ENCODE measurements at regions of chr20 and their contacts with region 1.

Region 1: DNA sequence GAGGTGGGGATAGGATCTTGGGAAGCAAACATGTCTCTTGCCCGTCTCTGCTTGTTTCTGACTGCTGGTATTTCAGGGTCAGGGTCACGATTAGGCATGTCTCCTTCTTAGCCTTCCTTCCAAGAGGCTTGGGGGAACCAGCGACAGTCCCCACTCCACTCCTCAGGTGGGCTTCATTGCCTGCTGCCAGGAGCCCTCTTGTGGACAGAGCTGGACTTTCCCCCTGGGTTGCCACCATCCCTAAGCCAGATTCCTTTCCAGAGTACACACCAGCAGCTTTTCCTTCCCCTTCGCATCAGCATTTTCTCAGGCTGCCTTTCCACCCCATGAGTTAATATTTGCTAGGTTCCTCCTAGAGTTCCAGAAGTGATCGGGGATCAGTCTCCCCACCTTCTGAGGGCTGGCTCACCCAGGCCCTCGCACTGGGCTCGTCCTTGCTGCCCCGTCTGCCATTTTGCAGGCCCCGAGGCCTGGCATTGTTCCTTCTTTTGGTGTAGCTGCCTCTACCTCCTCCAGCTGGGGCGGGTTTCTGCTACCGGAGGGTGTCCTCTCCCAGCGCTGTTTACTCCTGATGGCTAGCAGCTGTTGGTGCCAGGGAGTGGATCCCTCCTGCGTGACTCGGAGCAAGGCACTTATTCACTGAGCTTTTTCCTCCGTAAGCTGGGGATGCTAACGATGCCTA is 8.8 kb upstream of the C20orf144 start:
- DNase-seq: peak in 1 of 2 experiments; percentile 60
- H3K4me3 ChIP-seq: no peak overlapping the region
- H3K27ac ChIP-seq: no peak overlapping the region
- H3K4me1 ChIP-seq: peaks cover 48% of the 10 kb centered on the region
- H3K27me3 ChIP-seq: no peaks in the 10 kb centered on the region
- CTCF ChIP-seq: peak; percentile 77

Region 2: GRCh38 chr20:33443512-33444239 is 209.7 kb before region 1 on chr20 and contains the start of gene SNTA1:
- CTCF ChIA-PET with region 1: interaction called, 13 read pairs
- POLR2A ChIA-PET with region 1: no interaction called
- intact Hi-C with region 1: no loop called
- DNase-seq: peak; percentile 71 to 94
- H3K4me3 ChIP-seq: peak within 1 kb of the TSS; percentile 71
- H3K27ac ChIP-seq: no peak within 1 kb of the TSS
- H3K4me1 ChIP-seq: peaks cover 4% of the 10 kb centered on the region; the same call in 1 of the 2 replicates
- H3K27me3 ChIP-seq: no peaks in the 10 kb centered on the region
- CTCF ChIP-seq: no peak
- total RNA-seq, gene SNTA1: 7.6 and 10.1 TPM in 2 replicates

Region 3: DNA sequence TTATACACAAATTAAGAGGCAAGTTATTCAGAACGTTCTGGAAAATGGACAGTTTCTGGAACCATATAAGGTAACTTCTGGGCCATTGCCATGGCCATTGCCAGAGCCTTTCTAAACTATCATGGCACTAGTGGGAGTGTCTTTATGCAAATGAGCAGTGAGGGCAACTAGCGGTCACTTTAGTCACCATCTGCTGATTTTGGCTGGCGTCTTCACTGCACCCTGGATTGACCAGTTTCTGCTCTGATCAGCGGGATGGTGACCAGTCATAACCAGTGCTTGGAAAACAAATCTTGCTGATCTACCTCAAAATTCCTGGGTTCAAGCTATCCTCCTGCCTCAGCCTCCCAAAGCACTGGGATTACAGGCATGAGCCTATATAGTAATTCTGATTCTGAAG is 202.5 kb before region 1 on chr20:
- CTCF ChIA-PET with region 1: no interaction called
- POLR2A ChIA-PET with region 1: no interaction called
- intact Hi-C with region 1: loop called (anchors 2 kb)
- DNase-seq: peak; percentile 49 to 81
- H3K4me3 ChIP-seq: no peak overlapping the region
- H3K27ac ChIP-seq: peak overlapping the region; percentile 44
- H3K4me1 ChIP-seq: peaks cover 17% of the 10 kb centered on the region
- H3K27me3 ChIP-seq: no peaks in the 10 kb centered on the region
- CTCF ChIP-seq: no peak

Region 4: DNA sequence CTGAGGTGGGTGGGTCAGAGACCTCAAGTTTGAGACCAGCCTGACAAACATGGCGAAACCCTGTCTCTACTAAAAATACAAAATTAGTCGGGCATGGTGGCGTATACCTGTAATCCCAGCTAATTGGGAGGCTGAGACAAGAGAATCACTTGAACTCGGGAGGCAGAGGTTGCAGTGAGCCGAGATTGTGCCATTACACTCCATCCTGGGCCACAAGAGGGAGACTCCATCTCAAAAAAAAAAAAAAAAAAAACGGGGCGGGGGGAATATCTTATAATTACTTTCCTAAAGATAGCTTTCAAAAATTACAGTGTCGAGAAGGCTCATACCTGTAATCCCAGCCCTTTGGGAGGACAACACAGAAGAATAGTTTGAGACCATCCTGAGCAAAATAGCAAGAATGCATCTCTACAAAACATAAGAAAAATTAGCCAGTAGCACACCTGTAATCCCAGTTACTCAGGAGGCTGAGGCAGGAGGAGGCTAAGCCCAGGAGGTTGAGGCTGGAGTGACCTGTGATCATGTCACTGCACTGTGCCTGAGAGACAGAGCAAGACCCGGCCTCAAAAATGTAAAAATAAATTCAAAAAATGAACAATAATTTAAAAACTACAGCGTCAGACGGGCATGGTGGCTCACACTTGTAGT is 137.7 kb before region 1 on chr20:
- CTCF ChIA-PET with region 1: no interaction called
- POLR2A ChIA-PET with region 1: interaction called, 14 read pairs
- intact Hi-C with region 1: no loop called
- DNase-seq: no peak
- H3K4me3 ChIP-seq: no peak overlapping the region
- H3K27ac ChIP-seq: no peak overlapping the region
- H3K4me1 ChIP-seq: peaks cover 16% of the 10 kb centered on the region
- H3K27me3 ChIP-seq: no peaks in the 10 kb centered on the region
- CTCF ChIP-seq: peak; percentile 51; the same call in 1 of the 2 replicates

Measured in PC-9 (cell line).